IMR-90 (cell line): ENCODE measurements at regions of chr14 and their contacts with region 1.

Region 1: GRCh38 chr14:32150392-32150791 is 51.5 kb upstream of the RNU6-7 start:
- DNase-seq: no peak
- ATAC-seq: no peak
- H3K4me3 ChIP-seq: no peak overlapping the region
- H3K27ac ChIP-seq: no peak overlapping the region
- H3K4me1 ChIP-seq: no peaks in the 10 kb centered on the region
- H3K27me3 ChIP-seq: no peaks in the 10 kb centered on the region
- CTCF ChIP-seq: no peak
- POLR2A ChIP-seq: no peak
- RAD21 ChIP-seq: no peak

Region 2: GRCh38 chr14:32109676-32110547 is 40.5 kb before region 1 on chr14:
- CTCF ChIA-PET with region 1: no interaction called
- POLR2A ChIA-PET with region 1: no interaction called
- dilution Hi-C with region 1: no loop called
- in situ Hi-C with region 1: no loop called
- intact Hi-C with region 1: loop called (anchors 5 kb)
- DNase-seq: peak; percentile 86
- ATAC-seq: peak; percentile 87
- H3K4me3 ChIP-seq: no peak overlapping the region
- H3K27ac ChIP-seq: peak overlapping the region; percentile 17
- H3K4me1 ChIP-seq: peaks cover 9% of the 10 kb centered on the region; the same call in 1 of the 2 replicates
- H3K27me3 ChIP-seq: no peaks in the 10 kb centered on the region
- CTCF ChIP-seq: no peak
- POLR2A ChIP-seq: no peak
- RAD21 ChIP-seq: no peak

Region 3: GRCh38 chr14:32244404-32244803 is 94.0 kb after region 1 on chr14:
- CTCF ChIA-PET with region 1: no interaction called
- POLR2A ChIA-PET with region 1: interaction called, 13 read pairs
- dilution Hi-C with region 1: no loop called
- in situ Hi-C with region 1: no loop called
- intact Hi-C with region 1: no loop called
- DNase-seq: no peak
- ATAC-seq: no peak
- H3K4me3 ChIP-seq: no peak overlapping the region
- H3K27ac ChIP-seq: no peak overlapping the region
- H3K4me1 ChIP-seq: no peaks in the 10 kb centered on the region
- H3K27me3 ChIP-seq: peaks cover 9% of the 10 kb centered on the region
- CTCF ChIP-seq: peak; percentile 29
- POLR2A ChIP-seq: no peak
- RAD21 ChIP-seq: peak; percentile 38; the same call in 1 of the 2 replicates